Tibial artery (tissue), 4 donors: ENCODE measurements at regions of chrX and their contacts with region 1.

Region 1: GRCh38 chrX:45669715-45670340 is 469.2 kb upstream of the DIPK2B start:
- DNase-seq: no peak
- H3K4me3 ChIP-seq: no peak overlapping the region
- H3K27ac ChIP-seq: no peak overlapping the region
- H3K4me1 ChIP-seq: no peaks in the 10 kb centered on the region
- H3K27me3 ChIP-seq: no peaks in the 10 kb centered on the region
- CTCF ChIP-seq: no peak

Region 2: GRCh38 chrX:44529310-44529709 is 1140.5 kb before region 1 on chrX:
- intact Hi-C with region 1: loop called (anchors 5 kb)
- DNase-seq: no peak
- H3K4me3 ChIP-seq: no peak overlapping the region
- H3K27ac ChIP-seq: no peak overlapping the region
- H3K4me1 ChIP-seq: no peaks in the 10 kb centered on the region
- H3K27me3 ChIP-seq: no peaks in the 10 kb centered on the region
- CTCF ChIP-seq: no peak